Calu3 (cell line): ENCODE measurements at regions of chr9 and their contacts with region 1.

Region 1: DNA sequence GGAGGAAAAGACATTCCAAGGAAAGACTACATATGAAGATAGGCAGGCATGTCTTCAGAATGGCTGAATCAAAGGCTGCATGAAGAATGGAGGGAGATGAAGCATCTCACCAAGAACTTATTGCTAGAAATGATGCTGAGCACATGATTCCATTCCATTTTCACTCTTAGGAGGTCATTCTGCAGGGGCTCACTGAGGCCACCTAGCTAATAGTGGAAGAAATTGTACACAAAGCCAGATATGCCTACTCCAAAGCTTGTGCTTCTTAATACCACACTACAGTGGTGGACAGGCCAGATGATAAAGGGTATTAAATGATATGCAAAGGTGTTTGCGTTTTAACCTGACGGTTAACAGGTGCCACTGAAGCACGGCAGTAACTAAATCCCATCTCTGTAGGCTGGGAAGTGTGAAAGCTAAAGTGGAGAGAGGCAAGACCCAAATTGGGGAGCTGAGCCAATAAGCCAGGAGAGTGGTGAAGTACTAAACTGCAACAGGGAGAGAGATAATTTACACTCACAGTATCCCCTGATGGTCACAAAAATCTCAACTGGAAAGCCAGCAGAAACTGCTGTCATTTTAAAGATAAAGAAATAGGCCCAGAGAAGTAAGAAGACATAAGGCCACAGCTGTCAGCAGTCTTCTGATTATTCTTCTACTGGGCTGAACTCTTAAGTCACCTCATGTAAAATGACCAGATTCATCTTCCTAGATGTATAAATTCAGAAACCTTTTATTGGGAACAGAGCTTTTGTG is 14.6 kb downstream of the NDUFA8 start:
- DNase-seq: no peak
- H3K4me3 Mint-ChIP-seq: no peak overlapping the region
- H3K27ac Mint-ChIP-seq: no peak overlapping the region
- H3K4me1 Mint-ChIP-seq: peaks cover 11% of the 10 kb centered on the region
- H3K27me3 Mint-ChIP-seq: no peaks in the 10 kb centered on the region
- CTCF ChIP-seq: no peak

Region 2: DNA sequence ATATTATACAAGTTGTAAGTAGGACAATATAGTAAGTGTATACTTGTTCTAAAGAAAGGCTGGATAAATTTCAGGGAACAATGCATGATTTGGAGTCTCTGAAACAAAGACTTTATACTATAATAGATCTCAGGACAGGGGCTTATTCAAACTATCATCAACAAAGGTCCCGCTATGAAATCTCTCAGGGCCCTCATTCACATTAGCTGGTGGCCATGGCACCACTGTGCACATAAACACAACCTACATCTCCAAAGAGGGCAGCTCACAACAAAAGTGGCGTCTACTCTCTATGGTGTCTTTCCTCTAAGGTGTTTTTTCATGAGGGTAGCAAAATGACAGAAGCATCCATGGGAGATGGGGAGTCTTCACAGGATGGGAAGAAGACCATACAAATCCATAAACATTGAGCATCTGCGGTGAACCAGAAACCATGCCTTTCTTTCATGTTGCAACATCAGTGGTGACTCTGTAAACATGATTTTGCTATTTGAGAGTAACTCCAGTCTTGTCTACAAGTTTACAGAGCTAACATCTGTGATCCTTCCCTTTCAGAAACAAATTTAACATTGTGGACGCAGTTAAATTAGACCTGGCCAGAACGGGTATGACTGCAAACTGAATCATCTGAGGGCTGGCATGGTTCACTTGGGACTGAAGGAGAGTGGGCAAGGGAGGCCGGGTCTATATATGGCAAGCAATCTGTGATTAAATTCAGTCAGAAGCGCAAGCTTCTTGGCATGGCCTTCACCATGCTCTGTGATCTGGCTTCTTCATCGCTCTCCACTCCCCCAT is 57.4 kb before region 1 on chr9:
- CTCF ChIA-PET with region 1: no interaction called
- intact Hi-C with region 1: no loop called
- DNase-seq: no peak
- H3K4me3 Mint-ChIP-seq: no peak overlapping the region
- H3K27ac Mint-ChIP-seq: no peak overlapping the region
- H3K4me1 Mint-ChIP-seq: peaks cover 13% of the 10 kb centered on the region
- H3K27me3 Mint-ChIP-seq: no peaks in the 10 kb centered on the region
- CTCF ChIP-seq: no peak

Region 3: DNA sequence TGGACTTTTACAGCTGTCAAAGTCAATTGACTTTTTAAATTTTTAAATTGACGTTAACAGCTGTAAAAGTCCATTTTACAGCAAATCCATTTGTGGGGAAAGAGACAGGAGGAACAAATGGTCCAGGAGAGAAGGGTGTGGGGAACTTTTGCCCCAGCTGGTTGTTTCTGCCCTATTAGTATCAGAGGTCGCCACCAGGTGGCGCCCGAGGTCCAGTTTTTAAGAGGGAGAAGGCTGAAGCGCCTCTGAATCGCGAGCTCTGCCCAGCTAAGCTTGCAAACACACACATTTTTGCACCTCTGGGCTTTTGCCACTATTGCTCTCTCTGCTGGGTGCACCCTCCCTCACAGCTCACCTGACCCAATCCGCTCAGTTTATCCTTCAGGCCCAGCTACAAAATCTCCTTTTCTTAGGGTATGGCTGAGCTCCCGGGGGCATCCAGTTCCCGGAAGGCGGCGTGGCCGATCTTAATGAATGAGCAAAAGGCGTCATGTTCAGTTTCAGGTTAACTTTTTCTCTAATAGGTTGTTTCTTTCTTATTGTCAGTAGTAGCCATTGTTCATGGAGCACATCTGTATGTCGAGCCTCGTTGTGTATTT is 45.6 kb before region 1 on chr9:
- CTCF ChIA-PET with region 1: no interaction called
- intact Hi-C with region 1: no loop called
- DNase-seq: peak; percentile 74
- H3K4me3 Mint-ChIP-seq: peak overlapping the region; percentile 24
- H3K27ac Mint-ChIP-seq: no peak overlapping the region
- H3K4me1 Mint-ChIP-seq: peaks cover 6% of the 10 kb centered on the region
- H3K27me3 Mint-ChIP-seq: peaks cover 34% of the 10 kb centered on the region
- CTCF ChIP-seq: peak; percentile 73

Region 4: GRCh38 chr9:122264360-122265148 is 119.5 kb after region 1 on chr9 and contains the starts of genes MRRF and RBM18:
- CTCF ChIA-PET with region 1: no interaction called
- intact Hi-C with region 1: loop called (anchors 10 kb)
- DNase-seq: peak; percentile 86
- H3K4me3 Mint-ChIP-seq: peak within 1 kb of the TSS; percentile 90
- H3K27ac Mint-ChIP-seq: peak within 1 kb of the TSS; percentile 96
- H3K4me1 Mint-ChIP-seq: peaks cover 28% of the 10 kb centered on the region
- H3K27me3 Mint-ChIP-seq: no peaks in the 10 kb centered on the region
- CTCF ChIP-seq: no peak
- total RNA-seq, gene MRRF: 45.7 and 47.1 TPM in 2 replicates
- total RNA-seq, gene RBM18: 13.1 and 14.1 TPM in 2 replicates